ENCODE measurements at regions of chr14 and their contacts with region 1.

Region 1: GRCh38 chr14:20697273-20698017 is 8.9 kb downstream of the ANG start:
- DNase-seq: no peak
- ATAC-seq: peak; percentile 81

Region 2: DNA sequence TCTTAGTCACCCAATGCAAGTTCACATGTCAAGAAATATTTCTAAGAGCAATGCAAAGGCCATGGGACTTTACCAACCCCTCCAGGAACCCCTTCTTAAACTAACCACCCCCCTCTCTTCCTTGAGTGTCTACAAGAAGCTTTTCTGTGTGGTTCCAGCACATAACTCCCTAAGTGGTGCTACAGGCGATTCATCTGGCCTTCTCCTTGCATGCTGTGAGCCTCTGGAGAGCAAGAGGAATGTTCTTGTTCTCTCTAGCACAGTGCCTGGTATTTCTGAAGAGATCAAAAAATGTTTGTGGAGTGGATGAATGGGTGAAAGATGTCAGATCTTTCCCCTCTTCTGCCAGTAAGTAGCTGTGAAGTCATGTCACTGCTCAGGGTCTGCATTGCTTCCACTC is 100.3 kb before region 1 on chr14:
- intact Hi-C with region 1: no loop called
- DNase-seq: no peak
- ATAC-seq: no peak

Region 3: DNA sequence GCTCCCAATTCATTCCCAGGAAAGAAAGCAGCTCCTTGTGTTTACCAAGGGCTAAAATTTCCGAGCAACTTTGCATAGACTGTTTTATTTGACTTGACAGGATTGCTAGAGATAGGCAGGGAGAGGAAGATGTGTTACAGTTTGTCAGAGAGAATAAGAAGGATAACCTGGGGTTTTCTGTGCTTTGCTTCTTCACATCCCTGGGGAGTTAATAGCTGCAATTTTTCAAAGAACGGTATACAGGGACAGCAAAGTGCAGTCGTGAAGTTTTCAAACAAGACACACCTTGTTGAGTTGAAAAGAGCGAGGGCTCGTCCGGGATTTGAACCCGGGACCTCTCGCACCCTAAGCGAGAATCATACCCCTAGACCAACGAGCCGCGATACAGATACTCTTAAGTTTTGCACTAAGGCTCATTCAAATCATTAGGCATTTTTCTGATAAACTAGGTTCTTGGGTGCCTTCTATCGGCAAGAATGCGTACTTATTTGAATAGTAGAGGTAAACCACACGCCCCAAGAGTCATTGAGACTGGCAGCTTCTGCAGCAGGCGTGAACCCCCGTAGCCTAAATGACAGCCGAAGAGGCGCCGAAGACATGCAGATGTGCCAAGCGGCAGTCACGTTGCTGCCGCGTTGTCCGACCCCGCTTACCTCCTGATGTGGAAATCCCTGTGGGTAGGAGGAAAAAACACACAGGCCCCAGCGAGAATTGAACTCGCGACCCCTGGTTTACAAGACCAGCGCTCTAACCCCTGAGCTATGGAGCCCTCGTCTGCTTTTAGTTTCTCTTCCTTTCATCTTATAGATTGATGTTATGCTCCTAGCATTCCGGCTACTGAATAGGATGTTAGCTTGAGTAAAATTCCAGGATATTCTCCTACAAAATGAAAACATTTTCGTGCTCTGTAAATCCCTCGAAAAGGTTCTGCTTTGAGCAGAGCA is 84.1 kb before region 1 on chr14:
- intact Hi-C with region 1: no loop called
- DNase-seq: peak; percentile 78
- ATAC-seq: peak; percentile 85

Region 4: GRCh38 chr14:20743256-20743959 is 46.0 kb after region 1 on chr14:
- intact Hi-C with region 1: no loop called
- DNase-seq: no peak
- ATAC-seq: no peak

Region 5: DNA sequence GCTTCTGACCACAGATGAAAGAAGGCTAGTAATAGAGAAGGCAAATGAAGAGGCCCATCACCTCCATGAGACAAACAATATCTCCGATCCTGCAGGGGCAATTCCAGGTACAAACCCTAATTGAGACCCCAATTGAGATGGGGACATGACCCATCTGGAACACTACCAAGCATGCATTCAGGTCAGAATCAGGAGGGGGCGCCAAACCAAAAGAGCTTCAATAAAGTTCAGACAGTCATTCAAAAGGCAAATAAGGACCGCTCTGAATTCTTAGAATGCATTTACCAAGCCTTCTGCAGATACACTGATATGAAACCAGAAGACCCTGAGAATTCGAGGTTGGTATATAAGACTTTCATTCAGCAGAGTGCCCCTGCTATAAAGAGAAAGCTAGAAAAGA is 60.5 kb after region 1 on chr14:
- intact Hi-C with region 1: loop called (anchors 1 kb)
- DNase-seq: no peak
- ATAC-seq: no peak

Region 6: GRCh38 chr14:20873370-20874177 is 176.1 kb after region 1 on chr14:
- intact Hi-C with region 1: loop called (anchors 5 kb)
- DNase-seq: peak; percentile 94
- ATAC-seq: peak; percentile 94

Measured in Right ventricle myocardium inferior (tissue), 1 donor.